Activated T-helper 2 cell treated with anti-CD3 and anti-CD28 coated beads, Interferon-gamma antibody, Interleukin-2, Interleukin-4, amounts not matched to agents 10 μg/mL and 5 μg/mL and 100 μg/mL, durations not matched to agents 14 hours and 24 hours and 36 hours (primary cell): ENCODE measurements at regions of chr12 and their contacts with region 1.

Region 1: GRCh38 chr12:133080368-133081158 is at the start of gene ZNF140:
- DNase-seq: peak; percentile 93
- H3K4me3 Mint-ChIP-seq: no peak within 1 kb of the TSS
- H3K27ac Mint-ChIP-seq: no peak within 1 kb of the TSS
- H3K4me1 Mint-ChIP-seq: peaks cover 3% of the 10 kb centered on the region
- H3K27me3 Mint-ChIP-seq: no peaks in the 10 kb centered on the region
- total RNA-seq, gene ZNF140: 14.4 and 15.3 TPM in 2 replicates

Region 2: DNA sequence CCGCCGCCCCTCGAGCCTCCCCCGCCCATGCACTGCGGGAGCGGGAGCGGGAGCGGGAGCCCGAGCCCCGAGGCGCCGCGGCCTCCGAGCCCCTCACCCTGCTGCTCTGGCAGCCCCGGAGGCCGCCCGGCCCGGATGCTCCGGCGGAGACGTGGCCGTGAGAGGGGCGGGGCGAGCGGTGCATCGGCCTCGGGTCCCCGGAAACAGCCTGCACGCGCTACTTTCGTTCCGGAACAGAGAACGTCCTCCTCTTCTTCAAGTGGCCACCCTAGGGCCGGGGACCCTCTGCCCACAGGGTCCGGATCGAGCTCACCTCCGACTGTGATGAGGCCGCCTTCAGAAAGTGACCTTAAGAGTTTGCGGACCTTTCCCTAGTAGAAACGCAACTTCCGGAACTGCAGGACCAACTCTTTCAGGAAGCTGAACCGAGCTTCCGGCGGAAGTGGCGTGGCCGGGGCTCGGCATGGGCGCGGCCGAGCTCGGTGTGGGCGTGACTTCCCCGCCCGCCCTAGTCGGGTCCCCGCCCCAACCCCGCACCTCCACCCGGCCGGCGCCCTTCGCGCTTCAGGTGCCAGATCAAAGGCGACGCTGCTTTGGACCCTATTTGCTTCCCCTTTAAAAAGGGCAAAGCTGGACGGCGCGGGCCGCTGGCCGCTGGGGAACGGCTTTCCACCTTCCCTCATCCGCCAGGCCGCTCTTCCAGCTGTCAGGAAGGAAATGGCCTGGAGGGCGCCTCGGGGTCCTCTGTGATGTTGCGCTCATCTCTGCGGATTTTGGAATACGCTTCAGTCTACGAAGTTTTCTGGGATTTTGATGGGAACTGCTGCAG is 251.6 kb before region 1 on chr12 and contains the start of gene GOLGA3:
- intact Hi-C with region 1: loop called (anchors 1 kb)
- DNase-seq: peak; percentile 89
- H3K4me3 Mint-ChIP-seq: peak within 1 kb of the TSS; percentile 98
- H3K27ac Mint-ChIP-seq: peak within 1 kb of the TSS; percentile 100
- H3K4me1 Mint-ChIP-seq: peaks cover 36% of the 10 kb centered on the region
- H3K27me3 Mint-ChIP-seq: no peaks in the 10 kb centered on the region
- total RNA-seq, gene GOLGA3: 64.5 and 66.2 TPM in 2 replicates

Region 3: GRCh38 chr12:132908145-132909044 is 172.2 kb before region 1 on chr12:
- intact Hi-C with region 1: loop called (anchors 1 kb)
- DNase-seq: peak; percentile 93
- H3K4me3 Mint-ChIP-seq: peak overlapping the region; percentile 86
- H3K27ac Mint-ChIP-seq: peak overlapping the region; percentile 94
- H3K4me1 Mint-ChIP-seq: peaks cover 4% of the 10 kb centered on the region
- H3K27me3 Mint-ChIP-seq: peaks cover 13% of the 10 kb centered on the region

Region 4: DNA sequence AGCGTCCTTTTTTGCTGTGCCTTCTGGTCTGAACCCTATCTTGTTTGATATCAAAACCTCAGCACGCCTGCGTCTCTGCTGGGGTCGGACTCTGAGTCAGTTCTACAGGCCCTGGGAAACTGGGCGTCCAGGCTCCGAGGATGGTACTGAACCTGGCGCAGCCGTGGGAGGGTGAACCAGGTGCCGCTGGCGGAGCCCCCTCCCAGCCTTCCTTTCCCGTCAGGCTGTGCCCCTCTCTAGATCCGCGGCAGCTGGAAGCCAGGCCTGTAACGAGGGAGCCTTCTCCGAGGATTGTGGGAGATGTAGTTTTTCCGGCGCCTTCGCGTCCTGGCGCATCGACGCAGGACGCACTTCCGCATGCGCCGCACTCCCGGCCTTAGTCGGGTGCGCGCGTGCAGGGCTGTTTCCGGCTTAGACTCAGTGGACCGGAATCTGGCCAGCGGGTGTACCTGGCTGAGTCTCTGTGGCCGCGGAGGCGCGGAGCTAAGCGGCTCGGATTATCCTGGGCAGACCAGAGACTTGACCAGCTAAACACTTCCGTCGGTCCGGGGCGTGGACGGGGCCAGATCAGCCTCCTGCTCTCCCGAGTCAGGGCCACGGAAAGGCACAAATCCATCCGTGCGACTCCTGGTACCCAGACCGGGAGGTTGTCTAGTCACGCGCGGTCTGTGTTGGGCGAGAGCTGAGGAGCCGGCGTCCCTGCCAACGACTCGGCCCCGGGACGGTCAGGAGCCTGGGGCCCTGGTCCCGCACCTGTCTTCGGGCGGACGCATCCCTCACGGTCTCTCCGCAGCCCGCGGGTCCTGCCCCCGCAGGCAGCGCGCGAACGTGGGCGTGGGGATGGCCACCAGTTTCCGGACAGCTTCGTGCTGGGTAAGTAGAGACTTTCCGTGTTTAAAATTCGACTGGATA is 94.3 kb before region 1 on chr12 and contains the start of gene ZNF26:
- intact Hi-C with region 1: loop called (anchors 1 kb)
- DNase-seq: peak; percentile 84
- H3K4me3 Mint-ChIP-seq: peak within 1 kb of the TSS; percentile 89
- H3K27ac Mint-ChIP-seq: peak within 1 kb of the TSS; percentile 90
- H3K4me1 Mint-ChIP-seq: peaks cover 16% of the 10 kb centered on the region
- H3K27me3 Mint-ChIP-seq: no peaks in the 10 kb centered on the region
- total RNA-seq, gene ZNF26: 15.2 and 17.1 TPM in 2 replicates

Region 5: GRCh38 chr12:133130038-133130807 is 49.7 kb after region 1 on chr12 and contains the starts of genes ZNF10 and ZNF891:
- intact Hi-C with region 1: loop called (anchors 1 kb)
- DNase-seq: peak; percentile 94
- H3K4me3 Mint-ChIP-seq: peak within 1 kb of the TSS; percentile 92
- H3K27ac Mint-ChIP-seq: peak within 1 kb of the TSS; percentile 99
- H3K4me1 Mint-ChIP-seq: peaks cover 11% of the 10 kb centered on the region
- H3K27me3 Mint-ChIP-seq: no peaks in the 10 kb centered on the region
- total RNA-seq, gene ZNF10: 4.9 and 6.3 TPM in 2 replicates
- total RNA-seq, gene ZNF891: 2.0 and 2.3 TPM in 2 replicates